CD8-positive, alpha-beta T cell (primary cell): ENCODE measurements at regions of chr11 and their contacts with region 1.

Region 1: GRCh38 chr11:102287964-102288724 is 29.1 kb upstream of the BIRC3 start:
- DNase-seq: peak in 3 of 9 experiments; percentile 34 to 85 (median 76)
- ATAC-seq: peak; percentile 89
- H3K4me3 ChIP-seq: no peak overlapping the region
- H3K4me3 Mint-ChIP-seq: peak overlapping the region; percentile 35
- H3K27ac ChIP-seq: no peak overlapping the region
- H3K27ac Mint-ChIP-seq: no peak overlapping the region
- H3K4me1 ChIP-seq: no peaks in the 10 kb centered on the region
- H3K4me1 Mint-ChIP-seq: peaks cover 12% of the 10 kb centered on the region
- H3K27me3 ChIP-seq: no peaks in the 10 kb centered on the region
- H3K27me3 Mint-ChIP-seq: no peaks in the 10 kb centered on the region
- CTCF ChIP-seq: peak; percentile 80

Region 2: GRCh38 chr11:102204174-102204573 is 84.0 kb before region 1 on chr11:
- CTCF ChIA-PET with region 1: no interaction called
- POLR2A ChIA-PET with region 1: no interaction called
- intact Hi-C with region 1: no loop called
- DNase-seq: no peak
- ATAC-seq: no peak
- H3K4me3 ChIP-seq: no peak overlapping the region
- H3K4me3 Mint-ChIP-seq: no peak overlapping the region
- H3K27ac ChIP-seq: no peak overlapping the region
- H3K27ac Mint-ChIP-seq: no peak overlapping the region
- H3K4me1 ChIP-seq: no peaks in the 10 kb centered on the region
- H3K4me1 Mint-ChIP-seq: no peaks in the 10 kb centered on the region
- H3K27me3 ChIP-seq: no peaks in the 10 kb centered on the region
- H3K27me3 Mint-ChIP-seq: peaks cover 18% of the 10 kb centered on the region
- CTCF ChIP-seq: no peak

Region 3: GRCh38 chr11:102268329-102269193 is 19.6 kb before region 1 on chr11:
- CTCF ChIA-PET with region 1: interaction called, 15 read pairs
- POLR2A ChIA-PET with region 1: interaction called, 5 read pairs
- intact Hi-C with region 1: no loop called
- DNase-seq: peak; percentile 67 to 92 (median 80)
- ATAC-seq: peak; percentile 98
- H3K4me3 ChIP-seq: peak overlapping the region; percentile 33 to 59
- H3K4me3 Mint-ChIP-seq: peak overlapping the region; percentile 72
- H3K27ac ChIP-seq: no peak overlapping the region
- H3K27ac Mint-ChIP-seq: peak overlapping the region; percentile 33
- H3K4me1 ChIP-seq: peaks cover 17% of the 10 kb centered on the region
- H3K4me1 Mint-ChIP-seq: peaks cover 28% of the 10 kb centered on the region
- H3K27me3 ChIP-seq: no peaks in the 10 kb centered on the region
- H3K27me3 Mint-ChIP-seq: peaks cover 5% of the 10 kb centered on the region
- CTCF ChIP-seq: peak; percentile 45

Region 4: GRCh38 chr11:102323542-102324251 is 35.6 kb after region 1 on chr11:
- CTCF ChIA-PET with region 1: interaction called, 384 read pairs
- POLR2A ChIA-PET with region 1: interaction called, 8 read pairs
- intact Hi-C with region 1: loop called in 1 of 2 experiments (anchors 1 kb)
- DNase-seq: no peak
- ATAC-seq: no peak
- H3K4me3 ChIP-seq: no peak overlapping the region
- H3K4me3 Mint-ChIP-seq: no peak overlapping the region
- H3K27ac ChIP-seq: no peak overlapping the region
- H3K27ac Mint-ChIP-seq: peak overlapping the region; percentile 18
- H3K4me1 ChIP-seq: peaks cover 42% of the 10 kb centered on the region
- H3K4me1 Mint-ChIP-seq: peaks cover 57% of the 10 kb centered on the region
- H3K27me3 ChIP-seq: no peaks in the 10 kb centered on the region
- H3K27me3 Mint-ChIP-seq: no peaks in the 10 kb centered on the region
- CTCF ChIP-seq: no peak

Region 5: DNA sequence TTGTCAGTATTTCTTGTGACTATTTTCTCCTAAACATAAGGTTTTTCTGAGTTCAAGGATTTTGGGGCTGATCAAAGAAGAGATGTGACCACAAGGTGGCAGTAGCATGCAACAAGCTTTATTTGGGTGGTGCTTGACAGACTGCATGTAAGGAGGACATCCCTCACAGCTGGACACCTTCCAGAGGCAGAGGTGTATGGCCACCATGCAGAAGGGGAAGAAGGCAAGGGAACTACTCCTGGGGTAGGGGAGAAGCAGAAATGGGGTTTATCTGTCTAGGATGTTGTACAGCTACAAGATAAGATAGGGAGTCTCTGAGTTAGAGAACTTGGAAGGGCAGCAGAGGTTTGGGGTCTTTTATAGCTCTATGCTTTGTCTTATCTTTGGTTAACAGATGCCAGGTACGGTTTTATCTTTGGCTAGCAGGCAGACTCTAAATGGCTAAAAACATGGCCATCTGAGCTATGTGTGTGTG is 53.7 kb after region 1 on chr11:
- CTCF ChIA-PET with region 1: interaction called, 168 read pairs
- POLR2A ChIA-PET with region 1: interaction called, 7 read pairs
- intact Hi-C with region 1: loop called (anchors 1 kb)
- DNase-seq: peak; percentile 45 to 89 (median 77)
- ATAC-seq: peak; percentile 22
- H3K4me3 ChIP-seq: no peak overlapping the region
- H3K4me3 Mint-ChIP-seq: no peak overlapping the region
- H3K27ac ChIP-seq: no peak overlapping the region
- H3K27ac Mint-ChIP-seq: peak overlapping the region; percentile 29
- H3K4me1 ChIP-seq: peaks cover 12% of the 10 kb centered on the region
- H3K4me1 Mint-ChIP-seq: peaks cover 17% of the 10 kb centered on the region
- H3K27me3 ChIP-seq: no peaks in the 10 kb centered on the region
- H3K27me3 Mint-ChIP-seq: no peaks in the 10 kb centered on the region
- CTCF ChIP-seq: peak; percentile 74

Region 6: GRCh38 chr11:102495161-102496042 is 207.3 kb after region 1 on chr11:
- CTCF ChIA-PET with region 1: interaction called, 34 read pairs
- POLR2A ChIA-PET with region 1: no interaction called
- intact Hi-C with region 1: loop called (anchors 1 to 2 kb)
- DNase-seq: peak in 7 of 9 experiments; percentile 24 to 89 (median 39)
- ATAC-seq: peak; percentile 94
- H3K4me3 ChIP-seq: no peak overlapping the region
- H3K4me3 Mint-ChIP-seq: peak overlapping the region; percentile 43
- H3K27ac ChIP-seq: no peak overlapping the region
- H3K27ac Mint-ChIP-seq: peak overlapping the region; percentile 16
- H3K4me1 ChIP-seq: peaks cover 4% of the 10 kb centered on the region
- H3K4me1 Mint-ChIP-seq: peaks cover 14% of the 10 kb centered on the region
- H3K27me3 ChIP-seq: peaks cover 0 to 4% of the 10 kb centered on the region in 2 experiments
- H3K27me3 Mint-ChIP-seq: peaks cover 3% of the 10 kb centered on the region
- CTCF ChIP-seq: peak; percentile 87

Region 7: GRCh38 chr11:102666331-102666957 is 378.3 kb after region 1 on chr11:
- CTCF ChIA-PET with region 1: interaction called, 28 read pairs
- POLR2A ChIA-PET with region 1: interaction called, 4 read pairs
- intact Hi-C with region 1: loop called (anchors 1 to 5 kb)
- DNase-seq: peak in 4 of 9 experiments; percentile 13 to 54 (median 26)
- ATAC-seq: no peak
- H3K4me3 ChIP-seq: no peak overlapping the region
- H3K4me3 Mint-ChIP-seq: no peak overlapping the region
- H3K27ac ChIP-seq: no peak overlapping the region
- H3K27ac Mint-ChIP-seq: no peak overlapping the region
- H3K4me1 ChIP-seq: no peaks in the 10 kb centered on the region
- H3K4me1 Mint-ChIP-seq: no peaks in the 10 kb centered on the region
- H3K27me3 ChIP-seq: no peaks in the 10 kb centered on the region
- H3K27me3 Mint-ChIP-seq: peaks cover 4% of the 10 kb centered on the region
- CTCF ChIP-seq: peak; percentile 65